A549 (cell line): ENCODE measurements at regions of chr5 and their contacts with region 1.

Region 1: DNA sequence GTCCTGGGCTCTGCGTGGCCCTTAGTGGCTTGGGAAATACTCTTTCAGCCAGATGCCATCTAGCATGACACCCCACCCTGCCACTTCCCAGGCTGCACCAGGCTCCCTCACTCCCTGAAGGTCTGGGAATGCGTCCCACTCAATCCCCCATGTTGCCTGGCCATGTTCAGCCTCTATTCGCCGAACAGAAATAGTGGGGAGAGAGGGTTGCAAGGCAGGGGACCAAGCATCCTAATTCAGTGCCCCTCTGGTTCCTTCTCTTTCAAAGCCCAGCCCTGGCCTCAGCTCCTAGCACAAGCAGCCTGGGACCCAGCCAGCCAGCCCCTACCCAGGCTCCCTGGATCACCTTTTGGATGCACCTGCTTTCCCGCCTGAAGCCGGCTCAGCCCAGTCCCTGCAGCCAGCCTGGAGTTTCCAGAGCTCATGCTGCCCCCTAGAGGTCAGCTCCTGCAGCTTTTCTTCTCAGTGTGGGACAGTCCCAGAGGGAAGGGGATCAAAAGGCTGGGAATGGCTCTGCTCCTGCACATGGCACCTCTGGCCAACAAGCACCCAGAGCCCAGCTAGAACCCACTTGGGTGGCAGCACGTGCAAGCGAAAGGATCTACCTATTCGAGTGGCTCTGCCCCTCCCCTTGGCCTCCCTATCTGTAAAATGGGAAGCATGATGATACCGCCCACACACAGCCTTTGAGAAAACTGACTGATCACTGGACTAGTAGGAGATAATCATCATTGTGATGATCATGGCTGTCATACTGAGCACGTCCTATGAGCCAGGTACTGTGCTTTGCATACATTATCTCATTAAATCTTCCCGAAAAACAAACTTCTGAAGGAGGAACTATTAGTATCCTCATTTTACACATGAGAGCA is 48.7 kb upstream of the C5orf58 start:
- DNase-seq: peak; percentile 62 to 66
- ATAC-seq: peak; percentile 95 to 99
- H3K4me3 ChIP-seq: no peak overlapping the region
- H3K27ac ChIP-seq: peak overlapping the region in 1 of 2 experiments; percentile 32; a peak in 2 of 6 replicates
- H3K4me1 ChIP-seq: no peaks in the 10 kb centered on the region; the same call in 2 of the 3 replicates
- CTCF ChIP-seq: peak; percentile 79
- EP300 ChIP-seq: no peak
- POLR2A ChIP-seq: no peak
- RAD21 ChIP-seq: peak; percentile 95 to 98

Region 2: DNA sequence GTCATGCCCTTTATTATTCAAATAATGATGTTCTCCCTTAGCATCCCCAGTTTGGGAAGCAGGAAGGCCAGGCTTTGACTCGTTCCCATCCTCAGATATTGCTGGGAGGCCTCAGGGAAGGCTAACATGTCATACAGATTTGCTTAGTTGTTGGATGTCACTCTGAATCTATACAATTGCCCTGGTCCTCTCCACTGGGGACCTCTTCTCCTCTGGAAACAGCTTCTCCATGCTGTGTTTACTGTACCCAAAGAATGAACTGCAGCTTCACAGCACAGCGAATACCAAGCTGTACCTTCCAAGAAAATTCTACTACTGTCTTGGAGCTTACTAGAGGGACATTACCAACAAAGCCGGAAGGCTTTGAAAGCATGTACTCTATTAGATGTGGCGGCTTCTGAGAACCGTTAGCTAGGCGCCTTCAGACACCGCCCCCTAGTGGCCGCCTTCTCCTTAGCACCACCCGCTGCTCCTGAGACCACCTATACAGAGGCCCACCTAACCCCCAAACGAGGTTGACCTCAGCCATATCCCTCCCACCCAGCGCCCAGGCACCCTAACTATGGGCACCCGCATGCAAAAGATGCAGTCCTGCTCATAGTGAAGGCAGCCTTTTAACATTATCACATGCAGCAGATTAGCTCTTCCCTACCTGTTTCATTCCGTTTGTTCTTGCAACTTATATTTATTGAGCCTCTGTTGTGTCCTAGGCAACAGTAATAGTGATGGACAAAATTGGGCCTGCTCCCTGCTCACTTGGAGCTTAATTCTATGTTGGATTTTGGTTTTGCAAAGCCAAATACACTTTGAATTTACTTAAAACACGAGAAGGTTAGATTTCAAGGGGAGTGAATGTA is 113.3 kb before region 1 on chr5:
- CTCF ChIA-PET with region 1: interaction called, 13 read pairs
- POLR2A ChIA-PET with region 1: no interaction called
- DNase-seq: peak; percentile 45 to 52
- ATAC-seq: peak; percentile 70 to 97; a peak in 3 of 6 replicates
- H3K4me3 ChIP-seq: no peak overlapping the region
- H3K27ac ChIP-seq: no peak overlapping the region
- H3K4me1 ChIP-seq: no peaks in the 10 kb centered on the region
- CTCF ChIP-seq: peak; percentile 77
- EP300 ChIP-seq: no peak
- POLR2A ChIP-seq: no peak
- RAD21 ChIP-seq: peak; percentile 56 to 57

Region 3: GRCh38 chr5:170151097-170151831 is 32.8 kb before region 1 on chr5:
- CTCF ChIA-PET with region 1: interaction called, 15 read pairs
- POLR2A ChIA-PET with region 1: no interaction called
- DNase-seq: peak; percentile 84 to 88
- ATAC-seq: peak; percentile 84 to 90
- H3K4me3 ChIP-seq: no peak overlapping the region
- H3K27ac ChIP-seq: peak overlapping the region; percentile 65 to 87
- H3K4me1 ChIP-seq: peaks cover 25% of the 10 kb centered on the region
- CTCF ChIP-seq: no peak
- EP300 ChIP-seq: peak; percentile 43 to 84; a peak in 3 of 5 replicates
- POLR2A ChIP-seq: no peak
- RAD21 ChIP-seq: no peak; a peak in 1 of 5 replicates

Region 4: DNA sequence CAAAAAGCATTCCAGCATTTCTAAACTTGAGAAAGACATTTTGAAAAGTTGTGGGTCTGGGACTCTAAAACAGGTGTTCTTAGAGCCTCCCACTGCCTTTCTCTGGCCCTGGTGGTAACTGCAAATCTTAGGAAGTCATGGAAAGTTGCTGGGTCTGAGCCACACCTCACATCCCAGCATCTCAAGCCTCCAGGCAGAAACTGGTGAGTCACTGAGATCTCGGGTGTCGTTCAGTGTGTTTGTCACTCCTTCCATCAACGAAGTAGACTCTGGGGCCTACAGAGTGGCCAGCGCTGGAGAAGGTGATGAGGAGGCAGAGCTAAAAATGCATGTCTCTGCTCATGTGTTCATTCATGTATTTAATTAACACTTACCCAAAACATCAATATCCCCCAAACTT is 10.8 kb before region 1 on chr5:
- CTCF ChIA-PET with region 1: interaction called, 56 read pairs
- POLR2A ChIA-PET with region 1: interaction called, 3 read pairs
- DNase-seq: peak; percentile 52 to 71
- ATAC-seq: peak; percentile 79 to 81
- H3K4me3 ChIP-seq: no peak overlapping the region
- H3K27ac ChIP-seq: peak overlapping the region in 1 of 2 experiments; percentile 52; a peak in 3 of 6 replicates
- H3K4me1 ChIP-seq: peaks cover 12% of the 10 kb centered on the region
- CTCF ChIP-seq: no peak
- EP300 ChIP-seq: no peak
- POLR2A ChIP-seq: no peak
- RAD21 ChIP-seq: no peak

Region 5: GRCh38 chr5:170216266-170216864 is 32.3 kb after region 1 on chr5:
- CTCF ChIA-PET with region 1: interaction called, 26 read pairs
- POLR2A ChIA-PET with region 1: no interaction called
- DNase-seq: peak; percentile 73 to 77
- ATAC-seq: peak; percentile 81 to 92
- H3K4me3 ChIP-seq: no peak overlapping the region
- H3K27ac ChIP-seq: no peak overlapping the region
- H3K4me1 ChIP-seq: peaks cover 33% of the 10 kb centered on the region
- CTCF ChIP-seq: peak; percentile 84
- EP300 ChIP-seq: no peak
- POLR2A ChIP-seq: no peak
- RAD21 ChIP-seq: peak; percentile 94 to 99

Region 6: DNA sequence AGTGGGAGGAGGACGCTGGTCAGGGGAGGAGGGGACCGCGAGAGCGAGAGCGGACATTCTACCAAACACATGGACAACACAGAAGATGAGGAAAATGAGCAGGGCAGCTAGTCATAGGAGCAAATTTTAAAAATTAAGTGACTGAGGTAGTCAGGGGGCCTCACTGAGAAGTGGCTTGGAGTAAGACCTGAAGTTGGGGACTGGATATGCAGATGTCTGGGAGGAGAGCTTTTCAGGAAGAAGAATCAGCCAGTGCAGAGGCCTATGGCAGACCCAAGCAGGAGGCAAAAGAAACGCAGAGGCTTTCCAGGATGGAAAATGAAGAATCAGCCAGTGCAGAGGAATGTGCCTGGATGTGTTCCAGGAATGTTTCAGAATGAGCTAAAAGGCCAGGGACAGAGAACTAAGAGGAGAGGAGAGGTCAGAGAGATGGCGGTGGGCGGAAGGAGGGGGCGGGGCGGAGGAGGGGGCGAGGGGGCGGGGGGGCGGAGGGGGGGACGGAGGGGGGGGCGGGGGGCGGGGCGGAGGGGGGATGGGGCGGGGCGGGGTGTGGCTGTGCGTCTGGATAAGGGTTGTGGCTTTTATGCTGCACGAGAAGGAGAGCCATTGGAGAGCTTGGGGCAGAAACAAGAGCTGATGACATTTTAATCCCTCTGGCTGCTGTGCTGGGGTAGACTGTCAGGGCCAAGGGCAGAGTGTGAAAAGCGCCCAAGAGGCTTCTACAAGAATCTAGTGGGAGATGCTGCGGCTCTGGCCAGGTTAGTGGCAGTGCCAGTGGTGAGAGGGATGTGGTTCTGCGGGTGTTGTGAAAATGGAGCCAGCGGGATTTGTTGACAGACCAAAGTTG is 449.4 kb after region 1 on chr5:
- CTCF ChIA-PET with region 1: no interaction called
- POLR2A ChIA-PET with region 1: no interaction called
- DNase-seq: peak; percentile 69 to 77
- ATAC-seq: peak; percentile 33 to 62
- H3K4me3 ChIP-seq: peak overlapping the region; percentile 41
- H3K27ac ChIP-seq: peak overlapping the region; percentile 66 to 84
- H3K4me1 ChIP-seq: peaks cover 20% of the 10 kb centered on the region
- CTCF ChIP-seq: no peak
- EP300 ChIP-seq: no peak
- POLR2A ChIP-seq: no peak
- RAD21 ChIP-seq: no peak

Region 7: GRCh38 chr5:170662966-170663365 is 478.9 kb after region 1 on chr5:
- CTCF ChIA-PET with region 1: no interaction called
- POLR2A ChIA-PET with region 1: no interaction called
- DNase-seq: no peak
- ATAC-seq: no peak
- H3K4me3 ChIP-seq: no peak overlapping the region
- H3K27ac ChIP-seq: no peak overlapping the region
- H3K4me1 ChIP-seq: no peaks in the 10 kb centered on the region
- CTCF ChIP-seq: no peak
- EP300 ChIP-seq: no peak
- POLR2A ChIP-seq: no peak
- RAD21 ChIP-seq: no peak